ENCODE measurements at regions of chr14 and their contacts with region 1.

Region 1: GRCh38 chr14:60705100-60705499 is 19.1 kb downstream of the SIX4 start:
- DNase-seq: no peak
- H3K4me3 ChIP-seq: no peak overlapping the region
- H3K4me3 Mint-ChIP-seq: no peak overlapping the region
- H3K27ac Mint-ChIP-seq: no peak overlapping the region
- H3K4me1 ChIP-seq: no peaks in the 10 kb centered on the region
- H3K4me1 Mint-ChIP-seq: no peaks in the 10 kb centered on the region
- H3K27me3 ChIP-seq: no peaks in the 10 kb centered on the region
- H3K27me3 Mint-ChIP-seq: peaks cover 4% of the 10 kb centered on the region
- CTCF ChIP-seq: no peak

Region 2: DNA sequence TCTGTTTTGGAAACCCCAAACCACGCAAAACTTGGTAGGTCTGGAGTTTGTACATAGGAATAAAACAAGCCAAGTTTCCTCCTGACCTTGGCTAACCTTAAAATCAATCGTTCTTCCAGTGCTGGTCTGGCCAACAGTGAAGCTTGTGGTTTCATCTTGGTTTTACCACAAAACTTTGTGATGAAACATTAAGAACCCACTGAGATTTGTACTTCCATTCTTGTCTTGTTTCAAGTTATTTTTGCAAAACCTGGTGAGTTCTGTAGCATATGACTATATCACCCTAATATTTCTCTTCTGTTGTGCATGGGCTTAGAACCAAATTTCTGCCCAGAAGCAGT is 82.2 kb before region 1 on chr14:
- CTCF ChIA-PET with region 1: no interaction called
- POLR2A ChIA-PET with region 1: no interaction called
- intact Hi-C with region 1: no loop called
- DNase-seq: no peak
- H3K4me3 ChIP-seq: no peak overlapping the region
- H3K4me3 Mint-ChIP-seq: no peak overlapping the region
- H3K27ac Mint-ChIP-seq: no peak overlapping the region
- H3K4me1 ChIP-seq: peaks cover 6% of the 10 kb centered on the region
- H3K4me1 Mint-ChIP-seq: peaks cover 1% of the 10 kb centered on the region
- H3K27me3 ChIP-seq: no peaks in the 10 kb centered on the region
- H3K27me3 Mint-ChIP-seq: no peaks in the 10 kb centered on the region
- CTCF ChIP-seq: no peak

Region 3: DNA sequence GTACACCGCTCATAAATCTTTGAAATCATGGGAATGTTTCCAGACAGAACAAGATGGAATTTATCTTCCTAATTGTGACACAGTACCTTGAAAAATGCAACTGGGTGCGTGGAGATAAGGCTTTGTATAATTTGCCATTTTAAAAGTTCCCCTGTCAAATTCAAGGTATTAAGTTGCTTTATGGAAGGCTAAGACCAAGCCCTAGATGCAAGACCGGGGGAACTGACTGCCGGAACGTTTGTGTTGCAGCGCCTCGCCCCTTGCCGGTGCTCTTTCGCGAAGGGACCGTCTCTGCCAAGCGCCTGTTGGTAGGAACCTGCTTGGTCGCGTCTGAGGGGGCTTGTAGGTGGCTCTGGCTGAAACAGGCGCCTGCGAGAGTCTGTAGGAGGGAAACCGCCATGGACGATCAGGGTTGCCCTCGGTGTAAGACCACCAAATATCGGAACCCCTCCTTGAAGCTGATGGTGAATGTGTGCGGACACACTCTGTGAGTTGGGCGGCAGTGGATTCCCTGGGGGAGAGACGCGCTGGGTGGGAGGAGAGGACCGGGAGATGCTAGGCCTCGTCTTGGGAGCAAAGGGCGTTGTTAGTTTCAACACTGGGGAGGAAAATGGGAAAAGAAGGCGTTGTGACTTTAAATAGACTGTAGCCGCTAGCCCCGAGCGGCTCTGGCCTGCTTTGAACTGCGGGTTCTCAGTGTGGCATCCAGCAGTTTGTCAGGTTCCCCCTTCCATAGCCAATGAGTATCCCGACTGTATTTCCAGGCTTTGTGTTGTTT is 29.6 kb after region 1 on chr14 and contains the start of gene MNAT1:
- CTCF ChIA-PET with region 1: no interaction called
- POLR2A ChIA-PET with region 1: no interaction called
- intact Hi-C with region 1: no loop called
- DNase-seq: peak; percentile 82 to 86
- H3K4me3 ChIP-seq: peak within 1 kb of the TSS; percentile 93
- H3K4me3 Mint-ChIP-seq: peak within 1 kb of the TSS; percentile 96
- H3K27ac Mint-ChIP-seq: peak within 1 kb of the TSS; percentile 89
- H3K4me1 ChIP-seq: peaks cover 8% of the 10 kb centered on the region; the same call in 1 of the 2 replicates
- H3K4me1 Mint-ChIP-seq: peaks cover 6% of the 10 kb centered on the region
- H3K27me3 ChIP-seq: no peaks in the 10 kb centered on the region
- H3K27me3 Mint-ChIP-seq: no peaks in the 10 kb centered on the region
- CTCF ChIP-seq: no peak
- total RNA-seq, gene MNAT1: 36.4 and 38.8 TPM in 2 replicates

Region 4: DNA sequence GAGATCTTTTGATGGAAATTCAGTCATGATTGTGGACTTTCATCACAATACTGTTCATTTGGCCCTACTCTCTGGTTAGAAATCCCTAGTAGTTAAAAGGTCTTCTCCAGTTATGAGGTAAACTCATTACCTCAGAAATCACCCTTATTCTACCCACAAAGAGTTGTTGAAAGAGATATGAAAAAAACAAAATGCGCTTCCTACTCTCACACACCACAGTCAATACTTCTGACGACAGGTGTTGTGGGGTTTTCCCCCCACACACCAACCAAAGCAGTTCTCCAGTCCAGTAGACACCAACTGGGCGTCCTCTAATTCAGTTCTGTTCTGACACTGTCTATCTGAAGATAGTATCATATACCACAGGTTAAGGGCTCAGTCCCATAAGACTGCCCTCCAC is 220.9 kb after region 1 on chr14:
- CTCF ChIA-PET with region 1: interaction called, 12 read pairs
- POLR2A ChIA-PET with region 1: no interaction called
- intact Hi-C with region 1: no loop called
- DNase-seq: no peak
- H3K4me3 ChIP-seq: no peak overlapping the region
- H3K4me3 Mint-ChIP-seq: no peak overlapping the region
- H3K27ac Mint-ChIP-seq: no peak overlapping the region
- H3K4me1 ChIP-seq: no peaks in the 10 kb centered on the region
- H3K4me1 Mint-ChIP-seq: no peaks in the 10 kb centered on the region
- H3K27me3 ChIP-seq: no peaks in the 10 kb centered on the region
- H3K27me3 Mint-ChIP-seq: no peaks in the 10 kb centered on the region
- CTCF ChIP-seq: no peak

Measured in Caco-2 (cell line).